ENCODE measurements at regions of chr11 and their contacts with region 1.

Region 1: GRCh38 chr11:71580057-71581003 is 2.3 kb downstream of the KRTAP5-11 start:
- DNase-seq: no peak
- H3K4me3 ChIP-seq: no peak overlapping the region
- H3K27me3 ChIP-seq: no peaks in the 10 kb centered on the region; the same call in 1 of the 2 replicates
- CTCF ChIP-seq: peak; percentile 91

Region 2: GRCh38 chr11:71563401-71563800 is 16.9 kb before region 1 on chr11:
- CTCF ChIA-PET with region 1: interaction called, 14 read pairs
- POLR2A ChIA-PET with region 1: no interaction called
- DNase-seq: no peak
- H3K4me3 ChIP-seq: no peak overlapping the region
- H3K27me3 ChIP-seq: no peaks in the 10 kb centered on the region; the same call in 1 of the 2 replicates
- CTCF ChIP-seq: peak; percentile 30